Thyroid gland (tissue), 4 donors: ENCODE measurements at regions of chr6 and their contacts with region 1.

Region 1: GRCh38 chr6:158220786-158221442 is 52.8 kb downstream of the GTF2H5 start:
- DNase-seq: peak; percentile 78 to 82
- H3K4me3 ChIP-seq: no peak overlapping the region
- H3K27ac ChIP-seq: no peak overlapping the region
- H3K4me1 ChIP-seq: no peaks in the 10 kb centered on the region
- H3K27me3 ChIP-seq: no peaks in the 10 kb centered on the region
- CTCF ChIP-seq: peak; percentile 84 to 95 (median 92)
- POLR2A ChIP-seq: no peak

Region 2: GRCh38 chr6:158518191-158519127 is 297.5 kb after region 1 on chr6:
- intact Hi-C with region 1: loop called (anchors 5 kb)
- DNase-seq: peak; percentile 61 to 64
- H3K4me3 ChIP-seq: no peak overlapping the region
- H3K27ac ChIP-seq: no peak overlapping the region
- H3K4me1 ChIP-seq: peaks cover 0 to 12% of the 10 kb centered on the region in 2 donors
- H3K27me3 ChIP-seq: peaks cover 5% of the 10 kb centered on the region
- CTCF ChIP-seq: peak in 5 of 6 experiments; percentile 12 to 63 (median 58)
- POLR2A ChIP-seq: no peak

Region 3: DNA sequence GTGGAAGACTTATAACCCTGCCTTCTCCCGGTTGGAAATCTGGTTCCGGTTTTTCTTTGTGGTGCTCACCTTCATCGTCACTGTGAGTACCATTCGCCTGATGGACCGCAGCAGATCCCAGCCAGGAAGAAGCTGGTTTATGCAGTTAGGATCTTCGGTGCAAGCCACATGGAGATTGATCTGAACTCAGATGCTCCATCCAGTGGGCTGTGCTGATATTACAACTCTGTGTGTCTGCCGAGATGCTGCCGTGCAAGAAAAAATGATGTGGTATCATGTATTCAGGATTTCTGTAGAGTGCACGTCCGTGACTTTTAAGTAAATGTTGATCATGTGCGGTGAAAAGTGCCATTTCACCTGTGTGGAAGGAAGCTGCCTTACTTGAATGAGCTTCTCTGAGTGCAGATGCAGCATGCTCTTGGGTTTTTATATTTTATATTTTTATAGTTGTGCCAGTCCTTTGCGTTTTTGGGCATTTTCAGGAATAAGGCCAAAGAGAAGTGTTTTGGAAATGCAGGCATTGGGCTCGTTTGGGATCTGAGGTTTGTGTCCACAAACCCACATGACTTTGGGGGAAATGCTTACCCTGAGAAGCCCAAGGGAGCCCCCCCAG is 384.5 kb after region 1 on chr6:
- intact Hi-C with region 1: loop called (anchors 5 kb)
- DNase-seq: peak; percentile 61 to 64
- H3K4me3 ChIP-seq: no peak overlapping the region
- H3K27ac ChIP-seq: no peak overlapping the region
- H3K4me1 ChIP-seq: no peaks in the 10 kb centered on the region
- H3K27me3 ChIP-seq: no peaks in the 10 kb centered on the region
- CTCF ChIP-seq: peak; percentile 59 to 85 (median 71)
- POLR2A ChIP-seq: no peak